HEK293 (cell line): ENCODE measurements at regions of chr4 and their contacts with region 1.

Region 1: DNA sequence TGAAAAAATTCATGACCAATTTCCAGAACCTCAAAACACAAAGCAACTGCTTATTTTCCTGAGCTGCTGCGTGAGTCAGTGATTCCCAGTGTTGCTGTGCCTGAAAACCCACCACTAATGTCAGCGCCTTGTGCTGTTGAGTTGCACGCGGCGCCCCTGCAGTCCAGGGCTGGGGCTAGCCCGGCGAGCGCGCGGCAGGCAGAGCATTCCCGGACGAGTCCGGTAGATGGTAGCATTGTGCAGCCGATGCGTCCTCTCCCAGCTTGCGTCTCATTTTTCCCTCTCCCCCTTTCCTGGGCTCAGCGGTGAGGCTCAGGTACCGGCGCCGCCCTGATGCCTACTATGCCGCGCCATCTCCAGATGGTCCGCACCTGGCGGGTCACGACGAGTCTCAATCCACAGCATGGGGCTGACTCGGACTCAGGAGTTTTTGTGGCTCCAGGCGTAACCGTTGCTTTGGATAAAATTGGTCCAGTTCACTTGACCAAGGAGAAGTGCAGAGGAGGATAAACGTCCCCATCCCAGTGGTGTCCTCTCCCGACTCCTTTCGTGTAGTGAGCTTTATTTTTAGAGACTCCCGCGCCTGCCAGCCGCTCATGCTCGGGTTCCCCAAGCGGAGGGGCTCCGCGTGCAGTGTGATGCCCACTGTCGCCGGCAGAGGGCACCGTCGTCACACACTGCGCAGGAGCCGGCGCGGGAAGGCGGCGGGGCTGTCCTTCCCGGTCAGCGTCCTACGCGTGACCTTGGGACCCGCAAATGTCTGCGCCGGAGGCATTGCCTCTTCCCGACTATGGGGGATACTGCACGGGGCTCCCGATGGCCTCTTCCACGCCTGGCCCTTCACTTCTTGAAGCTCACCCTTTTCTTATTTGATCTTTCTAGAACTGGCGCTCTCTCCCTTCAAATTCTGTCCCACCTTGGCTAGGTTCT is 53.6 kb upstream of the IGFBP7 start:
- H3K4me3 ChIP-seq: peak overlapping the region; percentile 48
- H3K27ac ChIP-seq: peak overlapping the region; percentile 53; the same call in 1 of the 2 replicates
- H3K4me1 ChIP-seq: no peaks in the 10 kb centered on the region; the same call in 1 of the 2 replicates
- CTCF ChIP-seq: peak; percentile 91

Region 2: GRCh38 chr4:56861365-56861764 is 302.4 kb before region 1 on chr4:
- CTCF ChIA-PET with region 1: no interaction called
- POLR2A ChIA-PET with region 1: no interaction called
- H3K4me3 ChIP-seq: no peak overlapping the region
- H3K27ac ChIP-seq: no peak overlapping the region
- H3K4me1 ChIP-seq: no peaks in the 10 kb centered on the region
- CTCF ChIP-seq: no peak

Region 3: DNA sequence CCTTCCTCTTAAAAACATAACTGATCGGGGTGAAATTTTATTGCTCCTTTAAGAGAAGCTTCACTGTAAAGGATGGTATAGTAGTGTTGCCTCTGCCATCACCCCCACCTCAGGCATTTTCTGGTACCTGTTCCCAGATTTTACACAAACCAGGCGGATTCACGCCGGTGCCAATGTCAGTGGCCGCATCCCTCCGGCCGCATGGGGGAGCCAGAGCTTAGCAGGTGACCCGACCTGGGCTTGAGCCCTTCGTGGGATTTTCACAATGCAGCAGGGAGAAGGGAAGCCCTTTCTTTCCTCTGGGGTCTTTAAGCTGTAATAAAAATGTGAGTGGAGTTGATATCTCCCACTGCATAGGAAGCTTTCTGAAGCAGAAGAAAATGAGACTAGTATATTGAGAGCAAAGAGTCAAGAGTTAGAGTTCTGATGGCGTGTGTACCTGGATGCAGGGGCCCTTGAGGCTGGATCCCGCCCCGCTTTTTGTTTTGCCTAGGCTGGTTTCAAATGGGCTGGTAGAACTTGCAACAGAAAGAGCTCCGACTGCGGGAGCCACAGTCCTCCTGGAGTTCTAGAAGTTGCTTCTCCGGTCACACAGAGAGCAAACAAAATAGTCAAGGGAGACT is 125.7 kb before region 1 on chr4:
- CTCF ChIA-PET with region 1: interaction called, 61 read pairs
- POLR2A ChIA-PET with region 1: no interaction called
- H3K4me3 ChIP-seq: no peak overlapping the region
- H3K27ac ChIP-seq: no peak overlapping the region
- H3K4me1 ChIP-seq: no peaks in the 10 kb centered on the region
- CTCF ChIP-seq: peak; percentile 65

Region 4: GRCh38 chr4:57113870-57114269 is 49.9 kb before region 1 on chr4:
- CTCF ChIA-PET with region 1: interaction called, 14 read pairs
- POLR2A ChIA-PET with region 1: no interaction called
- H3K4me3 ChIP-seq: no peak overlapping the region
- H3K27ac ChIP-seq: no peak overlapping the region
- H3K4me1 ChIP-seq: no peaks in the 10 kb centered on the region
- CTCF ChIP-seq: no peak

Region 5: GRCh38 chr4:57190601-57191481 is 27.0 kb after region 1 on chr4:
- CTCF ChIA-PET with region 1: interaction called, 32 read pairs
- POLR2A ChIA-PET with region 1: no interaction called
- H3K4me3 ChIP-seq: no peak overlapping the region
- H3K27ac ChIP-seq: peak overlapping the region; percentile 44; the same call in 1 of the 2 replicates
- H3K4me1 ChIP-seq: peaks cover 6% of the 10 kb centered on the region; the same call in 1 of the 2 replicates
- CTCF ChIP-seq: no peak

Region 6: GRCh38 chr4:57426779-57427395 is 263.1 kb after region 1 on chr4:
- CTCF ChIA-PET with region 1: interaction called, 25 read pairs
- POLR2A ChIA-PET with region 1: no interaction called
- H3K4me3 ChIP-seq: no peak overlapping the region
- H3K27ac ChIP-seq: no peak overlapping the region
- H3K4me1 ChIP-seq: no peaks in the 10 kb centered on the region
- CTCF ChIP-seq: 0 out of 2 replicates have a peak, but pooled peaks have one; percentile 17